ENCODE measurements at regions of chr2 and their contacts with region 1.

Region 1: GRCh38 chr2:7517088-7517487 is 599.9 kb downstream of the RNF144A start:
- DNase-seq: peak; percentile 89
- ATAC-seq: peak; percentile 83
- H3K4me3 ChIP-seq: peak overlapping the region; percentile 20; the same call in 1 of the 2 replicates
- H3K27ac ChIP-seq: peak overlapping the region; percentile 97
- H3K4me1 ChIP-seq: peaks cover 32% of the 10 kb centered on the region
- H3K27me3 ChIP-seq: no peaks in the 10 kb centered on the region
- CTCF ChIP-seq: no peak

Region 2: DNA sequence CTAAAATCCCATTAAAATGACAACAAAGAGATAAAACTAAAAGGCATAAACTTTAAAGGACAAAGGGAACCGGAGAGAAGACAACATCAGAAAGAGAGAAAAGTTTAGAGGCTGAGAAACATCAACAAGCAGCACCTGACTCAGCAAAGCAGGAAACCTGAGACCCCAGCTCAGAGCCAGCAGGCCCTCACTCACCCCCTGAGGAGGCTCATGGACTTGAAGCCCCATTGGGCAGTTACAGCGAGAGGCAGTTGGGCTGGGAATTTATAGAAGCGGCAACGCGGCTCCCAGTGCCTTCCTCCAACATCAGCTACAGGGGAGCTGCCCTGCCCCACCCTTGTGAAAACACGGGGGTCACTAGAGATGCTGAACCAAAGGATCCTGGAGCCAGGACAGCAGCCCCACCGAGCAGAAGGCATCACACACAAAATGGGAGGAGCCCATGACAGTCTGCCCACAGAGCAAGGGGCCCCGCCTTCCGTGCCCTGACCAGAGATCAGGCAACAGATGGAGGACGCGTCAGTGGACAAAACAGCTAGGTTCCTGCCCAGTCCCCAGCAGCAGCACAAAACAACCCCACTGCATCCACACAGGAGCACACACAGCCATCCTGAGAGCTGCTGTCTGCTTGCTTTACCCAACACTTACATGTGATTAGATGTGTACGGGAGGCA is 704.1 kb before region 1 on chr2:
- CTCF ChIA-PET with region 1: no interaction called
- POLR2A ChIA-PET with region 1: no interaction called
- intact Hi-C with region 1: no loop called
- DNase-seq: no peak
- ATAC-seq: no peak
- H3K4me3 ChIP-seq: no peak overlapping the region
- H3K27ac ChIP-seq: no peak overlapping the region
- H3K4me1 ChIP-seq: no peaks in the 10 kb centered on the region
- H3K27me3 ChIP-seq: peaks cover 67% of the 10 kb centered on the region
- CTCF ChIP-seq: no peak

Region 3: GRCh38 chr2:7203055-7203467 is 314.0 kb before region 1 on chr2:
- CTCF ChIA-PET with region 1: no interaction called
- POLR2A ChIA-PET with region 1: no interaction called
- intact Hi-C with region 1: loop called (anchors 2 kb)
- DNase-seq: peak; percentile 74
- ATAC-seq: peak; percentile 76
- H3K4me3 ChIP-seq: no peak overlapping the region
- H3K27ac ChIP-seq: no peak overlapping the region
- H3K4me1 ChIP-seq: no peaks in the 10 kb centered on the region
- H3K27me3 ChIP-seq: no peaks in the 10 kb centered on the region
- CTCF ChIP-seq: peak; percentile 97

Region 4: DNA sequence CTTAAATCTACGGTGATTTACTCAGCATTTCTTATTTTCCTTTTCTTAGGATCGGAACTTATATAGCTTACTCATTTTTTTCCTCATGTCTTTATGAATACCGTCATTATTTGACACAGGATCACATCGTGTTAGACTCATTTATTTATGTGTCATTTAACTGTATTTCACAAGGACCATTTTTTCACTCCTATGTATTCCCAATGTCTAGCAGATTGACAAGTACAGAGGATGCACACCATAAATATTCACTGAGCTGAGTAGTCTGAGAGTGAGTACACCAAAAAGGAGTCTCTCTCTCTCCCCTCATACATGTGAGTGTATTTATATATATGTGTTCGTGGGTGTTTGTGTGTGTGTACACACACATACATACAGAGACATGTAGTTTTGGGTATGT is 26.4 kb before region 1 on chr2:
- CTCF ChIA-PET with region 1: no interaction called
- POLR2A ChIA-PET with region 1: no interaction called
- intact Hi-C with region 1: no loop called
- DNase-seq: no peak
- ATAC-seq: no peak
- H3K4me3 ChIP-seq: no peak overlapping the region
- H3K27ac ChIP-seq: no peak overlapping the region
- H3K4me1 ChIP-seq: no peaks in the 10 kb centered on the region; the same call in 1 of the 2 replicates
- H3K27me3 ChIP-seq: no peaks in the 10 kb centered on the region
- CTCF ChIP-seq: no peak

Region 5: DNA sequence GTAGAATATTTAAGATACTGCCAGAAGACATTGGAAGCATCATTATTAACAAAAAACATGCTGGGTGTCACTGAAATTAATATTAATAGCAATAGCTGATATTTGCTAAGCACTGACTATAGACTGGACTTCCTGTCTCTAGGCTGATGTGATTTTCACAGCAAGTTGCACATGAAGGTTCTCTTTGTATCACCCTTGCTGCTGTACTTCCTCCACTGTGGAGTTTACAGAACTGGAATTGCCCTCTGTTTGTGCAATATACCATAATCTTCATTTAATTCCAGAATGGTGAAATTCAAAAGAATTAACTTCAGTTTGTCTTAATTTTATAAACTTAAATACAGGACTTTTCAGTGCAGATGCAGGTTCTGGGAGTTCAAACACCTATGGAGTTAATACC is 14.8 kb before region 1 on chr2:
- CTCF ChIA-PET with region 1: no interaction called
- POLR2A ChIA-PET with region 1: no interaction called
- intact Hi-C with region 1: no loop called
- DNase-seq: no peak
- ATAC-seq: no peak
- H3K4me3 ChIP-seq: no peak overlapping the region
- H3K27ac ChIP-seq: peak overlapping the region; percentile 10; the same call in 1 of the 2 replicates
- H3K4me1 ChIP-seq: peaks cover 10% of the 10 kb centered on the region; the same call in 1 of the 2 replicates
- H3K27me3 ChIP-seq: no peaks in the 10 kb centered on the region
- CTCF ChIP-seq: no peak

Region 6: DNA sequence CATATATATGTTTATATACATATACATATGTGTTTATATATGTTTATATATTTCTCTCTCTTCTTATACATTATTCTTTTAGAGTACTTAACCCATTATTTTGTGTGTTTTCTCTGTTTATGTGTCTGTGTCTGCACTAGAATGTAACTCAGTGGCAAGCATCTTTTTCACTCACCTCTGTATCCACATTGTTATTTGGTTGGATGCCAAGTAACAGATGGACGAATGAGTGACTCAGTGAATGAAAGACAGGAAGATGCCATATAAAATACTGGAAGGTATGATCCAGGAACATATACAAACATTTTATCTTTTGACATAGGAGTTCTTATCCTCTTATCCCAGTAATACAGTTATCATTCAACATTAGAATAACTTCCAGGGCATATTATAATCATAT is 84.9 kb after region 1 on chr2:
- CTCF ChIA-PET with region 1: no interaction called
- POLR2A ChIA-PET with region 1: no interaction called
- intact Hi-C with region 1: loop called (anchors 2 kb)
- DNase-seq: peak; percentile 51
- ATAC-seq: no peak
- H3K4me3 ChIP-seq: no peak overlapping the region
- H3K27ac ChIP-seq: no peak overlapping the region
- H3K4me1 ChIP-seq: peaks cover 7% of the 10 kb centered on the region; the same call in 1 of the 2 replicates
- H3K27me3 ChIP-seq: no peaks in the 10 kb centered on the region
- CTCF ChIP-seq: no peak

Region 7: GRCh38 chr2:7620255-7620654 is 103.2 kb after region 1 on chr2:
- CTCF ChIA-PET with region 1: no interaction called
- POLR2A ChIA-PET with region 1: no interaction called
- intact Hi-C with region 1: no loop called
- DNase-seq: peak; percentile 80
- ATAC-seq: peak; percentile 93
- H3K4me3 ChIP-seq: no peak overlapping the region
- H3K27ac ChIP-seq: peak overlapping the region; percentile 55
- H3K4me1 ChIP-seq: peaks cover 24% of the 10 kb centered on the region
- H3K27me3 ChIP-seq: no peaks in the 10 kb centered on the region
- CTCF ChIP-seq: no peak

Region 8: DNA sequence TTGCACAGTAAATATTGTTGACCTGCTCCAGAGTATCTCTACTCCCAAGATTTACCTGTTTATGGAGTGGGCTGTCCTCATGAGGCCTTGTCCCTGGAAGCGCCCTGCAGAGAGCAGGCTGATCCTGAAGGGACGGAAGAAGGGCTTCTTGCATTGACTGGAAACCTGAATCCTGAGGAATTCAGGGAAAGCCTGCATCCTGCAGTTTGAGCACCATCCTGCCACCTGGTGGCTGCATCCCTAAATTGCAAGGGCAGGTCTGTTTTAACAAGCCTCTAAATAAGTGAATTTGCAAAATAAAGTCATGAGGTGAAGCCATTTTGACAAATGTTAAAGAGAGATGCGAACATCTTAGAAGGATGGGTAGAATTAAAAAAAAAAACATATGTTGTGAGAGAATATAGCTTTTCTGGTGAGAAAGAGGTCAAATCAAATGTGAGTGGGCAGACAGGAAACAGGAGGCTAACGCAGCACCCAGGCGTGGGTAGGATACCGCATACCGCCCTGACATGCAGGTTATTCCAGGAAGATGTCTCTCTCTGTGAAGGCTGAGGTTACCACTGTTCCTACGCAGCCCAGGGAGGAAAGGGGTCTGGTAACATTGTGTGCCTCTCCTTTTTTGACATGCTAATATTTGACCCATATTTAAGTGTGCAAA is 155.1 kb after region 1 on chr2:
- CTCF ChIA-PET with region 1: no interaction called
- POLR2A ChIA-PET with region 1: no interaction called
- intact Hi-C with region 1: loop called (anchors 2 kb)
- DNase-seq: peak; percentile 88
- ATAC-seq: peak; percentile 74
- H3K4me3 ChIP-seq: no peak overlapping the region
- H3K27ac ChIP-seq: no peak overlapping the region
- H3K4me1 ChIP-seq: 0 out of 2 replicates have a peak, but pooled peaks cover 6% of the 10 kb centered on the region
- H3K27me3 ChIP-seq: no peaks in the 10 kb centered on the region
- CTCF ChIP-seq: peak; percentile 92

Region 9: DNA sequence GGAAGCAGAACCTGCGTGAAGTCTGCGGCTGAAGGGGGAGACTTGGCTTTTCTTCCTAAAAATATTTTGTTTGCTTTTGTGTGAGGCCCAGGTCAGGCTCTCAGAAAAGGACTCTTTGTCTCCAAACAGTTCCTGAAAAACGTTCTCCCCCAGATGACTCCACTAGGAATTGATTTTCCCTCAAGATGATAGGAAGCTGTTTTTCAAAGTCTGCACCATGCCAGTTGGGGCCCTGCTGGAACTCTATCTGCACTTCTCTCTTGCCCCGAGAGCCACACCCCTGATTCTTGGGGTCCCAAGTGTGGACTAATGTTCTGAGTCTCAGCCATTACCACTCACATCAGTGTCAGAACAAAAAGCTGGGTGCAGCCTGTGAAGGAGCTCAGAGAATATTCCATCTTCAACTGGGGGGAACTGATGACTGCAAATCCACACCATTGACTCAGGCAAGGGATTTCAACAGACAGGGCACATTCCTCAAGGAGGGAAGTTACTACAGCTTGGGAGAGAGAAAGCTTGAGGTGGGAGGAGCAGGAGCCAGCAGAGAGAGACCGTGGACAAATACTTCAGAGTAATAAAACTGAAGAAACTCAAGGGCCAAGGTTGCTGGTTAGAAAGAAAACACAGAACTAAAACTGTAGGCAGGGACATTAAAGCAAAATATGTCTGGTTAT is 168.4 kb after region 1 on chr2:
- CTCF ChIA-PET with region 1: no interaction called
- POLR2A ChIA-PET with region 1: no interaction called
- intact Hi-C with region 1: loop called (anchors 5 kb)
- DNase-seq: peak; percentile 53
- ATAC-seq: peak; percentile 49
- H3K4me3 ChIP-seq: no peak overlapping the region
- H3K27ac ChIP-seq: 0 out of 2 replicates have a peak overlapping the region, but pooled peaks have one; percentile 10
- H3K4me1 ChIP-seq: peaks cover 27% of the 10 kb centered on the region
- H3K27me3 ChIP-seq: no peaks in the 10 kb centered on the region
- CTCF ChIP-seq: no peak

Region 10: DNA sequence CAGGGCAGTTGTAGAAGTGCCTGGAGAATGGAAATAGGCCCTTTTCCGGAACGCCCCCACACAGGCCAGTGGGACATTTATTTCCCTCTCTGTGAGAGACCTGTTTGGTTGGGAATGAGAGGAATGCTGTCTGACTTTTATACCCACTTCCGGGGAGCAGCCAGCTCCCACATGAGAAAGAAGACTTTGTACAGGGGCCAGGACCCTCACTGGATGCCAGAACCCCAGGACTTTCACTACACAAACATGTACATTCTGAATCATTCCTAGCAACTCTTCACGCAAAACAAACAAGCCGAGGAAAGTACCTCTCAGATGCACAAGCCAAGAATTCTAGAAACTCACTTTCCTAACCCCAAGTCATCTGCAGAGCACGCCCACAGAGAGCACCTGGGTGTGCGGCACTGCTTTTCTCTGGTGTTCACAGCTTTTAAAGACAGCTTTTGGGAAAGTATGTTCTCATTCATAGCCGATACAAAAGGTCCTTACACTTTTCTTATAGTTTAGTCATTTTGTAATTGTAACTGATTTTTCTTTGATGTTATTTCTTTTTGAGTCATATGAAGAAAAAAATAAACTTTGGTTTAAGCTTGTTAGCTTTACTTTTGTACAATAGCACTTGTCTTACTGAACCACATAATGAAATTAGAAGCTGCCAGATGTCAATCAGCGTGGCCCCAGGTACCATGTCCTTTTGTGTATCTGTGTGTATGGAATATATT is 308.7 kb after region 1 on chr2:
- CTCF ChIA-PET with region 1: no interaction called
- POLR2A ChIA-PET with region 1: no interaction called
- intact Hi-C with region 1: loop called (anchors 10 kb)
- DNase-seq: peak; percentile 96
- ATAC-seq: peak; percentile 94
- H3K4me3 ChIP-seq: peak overlapping the region; percentile 31
- H3K27ac ChIP-seq: peak overlapping the region; percentile 90
- H3K4me1 ChIP-seq: peaks cover 21% of the 10 kb centered on the region
- H3K27me3 ChIP-seq: no peaks in the 10 kb centered on the region
- CTCF ChIP-seq: no peak

Region 11: DNA sequence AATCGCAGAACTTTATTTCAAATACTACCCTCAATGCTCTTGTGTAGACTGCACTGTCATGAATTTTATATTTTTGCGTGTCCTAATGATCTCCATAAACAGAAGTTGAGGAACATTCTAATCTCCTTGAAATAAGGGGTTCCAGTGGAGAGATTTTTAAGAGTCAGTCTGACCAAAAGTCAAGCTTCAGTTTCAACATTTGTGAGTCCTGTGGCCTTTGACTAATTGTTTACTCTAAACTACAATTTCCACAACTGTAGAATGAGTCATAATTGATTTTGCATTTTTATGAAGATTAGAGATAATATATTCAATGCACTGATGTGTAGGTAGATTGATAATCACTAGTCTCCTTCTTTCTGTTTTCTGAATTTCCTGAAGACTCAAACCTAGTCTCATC is 444.5 kb after region 1 on chr2:
- CTCF ChIA-PET with region 1: no interaction called
- POLR2A ChIA-PET with region 1: no interaction called
- intact Hi-C with region 1: loop called (anchors 2 kb)
- DNase-seq: peak; percentile 48
- ATAC-seq: peak; percentile 77
- H3K4me3 ChIP-seq: no peak overlapping the region
- H3K27ac ChIP-seq: peak overlapping the region; percentile 3; the same call in 1 of the 2 replicates
- H3K4me1 ChIP-seq: peaks cover 15% of the 10 kb centered on the region
- H3K27me3 ChIP-seq: no peaks in the 10 kb centered on the region
- CTCF ChIP-seq: no peak

Measured in PC-3 (cell line).